ENCODE measurements at regions of chr12 and their contacts with region 1.

Region 1: DNA sequence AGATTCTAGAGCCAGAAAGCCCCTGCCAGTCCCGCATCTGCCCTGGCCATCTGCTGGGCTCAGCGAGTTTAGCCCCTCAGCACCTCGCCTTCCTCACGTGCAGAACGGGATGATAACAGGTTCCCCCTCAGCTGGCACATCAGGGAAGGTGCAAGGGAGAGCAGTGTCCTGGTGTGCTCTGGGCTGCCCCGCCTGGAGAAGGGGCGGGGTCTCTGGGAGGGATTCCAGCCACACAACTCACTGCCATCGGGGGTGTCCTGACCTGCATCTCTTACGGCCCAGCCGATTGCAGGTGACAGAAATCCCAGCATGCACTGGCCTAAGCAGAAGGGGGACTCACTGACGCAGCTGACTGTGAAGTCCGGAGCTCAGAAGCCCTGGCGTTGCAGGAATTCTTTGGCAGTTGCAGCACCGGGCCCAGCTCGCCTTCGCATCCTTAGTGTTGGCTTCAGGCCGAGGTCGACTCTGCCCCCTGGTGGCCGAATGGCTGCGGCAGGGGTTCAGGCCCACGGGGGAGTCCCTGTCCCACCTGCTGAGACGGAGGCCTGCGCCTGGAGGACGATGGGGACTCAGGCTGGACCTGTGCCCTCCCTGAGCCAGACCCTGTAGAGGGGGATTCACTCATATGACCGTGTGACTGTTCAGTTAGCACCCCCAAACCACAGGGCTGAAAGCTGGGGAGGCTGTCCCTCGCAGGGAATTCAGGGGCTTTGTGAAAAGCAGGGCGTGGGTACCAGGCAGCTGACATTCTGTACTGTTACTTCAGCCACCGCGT is 178.6 kb downstream of the ADGRD1 start:
- DNase-seq: peak; percentile 84
- CTCF ChIP-seq: peak; percentile 80

Region 2: DNA sequence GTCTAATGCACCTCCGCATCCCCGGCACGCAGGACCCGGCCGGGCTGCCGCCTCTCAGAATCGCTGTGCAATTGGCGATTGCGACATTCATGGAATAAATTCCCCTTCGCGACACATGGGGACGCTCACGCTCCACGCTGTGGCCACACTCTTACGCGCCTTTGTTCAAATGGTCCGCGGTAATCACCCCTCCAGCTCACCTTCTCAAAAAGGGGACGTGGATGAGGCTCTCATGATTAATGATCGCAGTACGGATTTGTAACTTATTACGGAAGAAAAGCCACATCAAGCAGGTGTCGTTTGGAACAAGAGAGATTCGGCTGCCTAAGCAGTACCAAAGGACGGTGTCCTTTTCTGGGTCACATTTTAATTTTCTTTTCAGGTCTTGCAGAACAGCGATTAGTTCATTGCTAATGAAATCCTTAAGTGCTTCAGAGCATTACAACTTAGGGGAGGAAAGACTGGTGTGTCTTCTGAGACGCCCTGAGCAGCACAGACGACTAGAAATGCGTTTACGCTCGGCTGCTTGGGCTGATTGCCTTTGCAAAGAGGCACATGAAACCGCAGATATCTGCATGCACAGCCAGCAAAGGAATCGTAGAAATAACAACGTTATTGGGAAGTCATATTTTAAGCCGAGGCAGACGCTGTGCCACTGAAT is 215.9 kb before region 1 on chr12:
- CTCF ChIA-PET with region 1: interaction called, 48 read pairs
- POLR2A ChIA-PET with region 1: no interaction called
- DNase-seq: peak; percentile 75
- CTCF ChIP-seq: peak; percentile 87

Region 3: DNA sequence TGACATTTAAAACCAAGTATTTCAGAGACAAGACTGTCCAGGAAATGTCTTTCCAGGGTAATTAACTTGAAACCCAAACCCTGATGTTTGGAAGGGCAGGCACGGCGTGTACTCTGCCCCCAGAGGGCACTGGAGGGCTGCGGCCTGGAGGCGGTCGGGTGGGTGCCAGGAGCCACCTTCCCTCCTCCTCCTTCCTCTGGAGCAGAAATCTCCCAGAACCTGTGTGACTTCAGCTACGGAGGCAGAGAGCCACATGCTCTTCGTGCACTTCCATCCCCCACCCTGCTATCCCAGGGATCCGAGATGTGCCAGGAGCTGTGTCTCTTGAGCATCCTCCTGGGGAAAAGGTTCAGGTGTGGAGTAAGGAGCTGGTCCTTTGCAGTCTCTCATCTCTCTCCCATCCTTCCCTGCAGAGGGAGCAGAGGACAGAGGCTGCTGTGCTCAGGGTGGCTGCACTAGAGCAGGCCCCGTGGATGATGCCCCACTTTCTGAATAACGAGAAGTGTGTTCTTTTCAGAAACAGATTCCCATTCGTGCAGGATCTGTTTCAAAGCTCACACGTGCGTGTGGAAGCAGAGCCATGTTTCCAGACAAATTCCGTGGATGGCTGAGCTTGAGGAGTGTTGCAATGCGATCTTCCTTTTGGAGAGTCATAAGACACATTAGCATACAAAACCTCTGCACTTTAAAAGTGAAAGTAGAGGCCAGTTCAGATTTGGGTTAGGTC is 15.8 kb before region 1 on chr12:
- CTCF ChIA-PET with region 1: interaction called, 27 read pairs
- POLR2A ChIA-PET with region 1: no interaction called
- DNase-seq: no peak
- CTCF ChIP-seq: peak; percentile 28

Region 4: DNA sequence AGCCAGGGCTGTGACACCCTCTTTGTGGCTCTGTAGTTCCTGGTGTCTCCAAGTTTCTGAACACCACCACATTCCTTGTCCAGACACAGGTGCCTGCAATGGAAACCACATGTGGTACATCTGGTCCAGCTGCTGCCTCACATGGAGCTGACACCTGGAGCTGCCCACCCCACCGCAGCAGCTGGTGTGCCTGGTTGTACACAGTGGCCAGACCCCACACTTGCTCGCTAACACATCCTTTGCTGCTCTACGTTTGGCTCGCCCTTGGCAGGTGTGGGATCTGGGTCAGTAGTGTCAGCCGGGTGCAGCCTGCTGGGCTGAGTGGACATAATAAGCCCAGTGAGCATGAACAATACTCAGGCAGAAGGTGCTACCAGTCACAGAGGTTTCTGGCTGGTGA is 20.3 kb after region 1 on chr12:
- CTCF ChIA-PET with region 1: interaction called, 22 read pairs
- POLR2A ChIA-PET with region 1: no interaction called
- DNase-seq: no peak
- CTCF ChIP-seq: no peak